Aorta (tissue), 5 donors: ENCODE measurements at regions of chr3 and their contacts with region 1.

Region 1: DNA sequence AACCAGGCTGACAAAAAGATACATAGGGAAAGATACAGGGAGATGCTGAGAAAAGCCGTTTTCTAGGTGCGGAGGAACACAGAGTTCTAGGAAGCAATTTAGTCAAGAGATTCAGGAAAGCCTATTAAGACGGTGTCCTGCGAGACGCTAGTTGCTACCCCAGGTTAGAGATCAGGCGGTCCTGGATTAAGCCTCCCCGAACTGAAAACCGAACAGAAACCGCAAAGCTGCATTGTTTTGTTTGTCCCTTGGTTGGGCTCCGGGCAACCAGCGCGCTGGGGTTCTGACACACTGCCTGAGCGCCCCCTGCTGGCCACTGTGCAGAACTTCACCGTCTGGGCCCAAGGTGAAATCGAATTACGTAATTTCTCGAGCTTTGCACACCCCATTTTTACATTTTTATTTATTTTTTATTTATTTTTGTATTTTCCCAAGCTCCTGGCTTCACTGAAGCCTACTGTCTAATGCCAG is 37.3 kb upstream of the NDUFB4 start:
- DNase-seq: peak; percentile 93 to 96
- ATAC-seq: peak; percentile 94
- H3K4me3 ChIP-seq: peak overlapping the region; percentile 48 to 49
- H3K27ac ChIP-seq: peak overlapping the region; percentile 82 to 84
- H3K4me1 ChIP-seq: no peaks in the 10 kb centered on the region
- H3K27me3 ChIP-seq: no peaks in the 10 kb centered on the region

Region 2: DNA sequence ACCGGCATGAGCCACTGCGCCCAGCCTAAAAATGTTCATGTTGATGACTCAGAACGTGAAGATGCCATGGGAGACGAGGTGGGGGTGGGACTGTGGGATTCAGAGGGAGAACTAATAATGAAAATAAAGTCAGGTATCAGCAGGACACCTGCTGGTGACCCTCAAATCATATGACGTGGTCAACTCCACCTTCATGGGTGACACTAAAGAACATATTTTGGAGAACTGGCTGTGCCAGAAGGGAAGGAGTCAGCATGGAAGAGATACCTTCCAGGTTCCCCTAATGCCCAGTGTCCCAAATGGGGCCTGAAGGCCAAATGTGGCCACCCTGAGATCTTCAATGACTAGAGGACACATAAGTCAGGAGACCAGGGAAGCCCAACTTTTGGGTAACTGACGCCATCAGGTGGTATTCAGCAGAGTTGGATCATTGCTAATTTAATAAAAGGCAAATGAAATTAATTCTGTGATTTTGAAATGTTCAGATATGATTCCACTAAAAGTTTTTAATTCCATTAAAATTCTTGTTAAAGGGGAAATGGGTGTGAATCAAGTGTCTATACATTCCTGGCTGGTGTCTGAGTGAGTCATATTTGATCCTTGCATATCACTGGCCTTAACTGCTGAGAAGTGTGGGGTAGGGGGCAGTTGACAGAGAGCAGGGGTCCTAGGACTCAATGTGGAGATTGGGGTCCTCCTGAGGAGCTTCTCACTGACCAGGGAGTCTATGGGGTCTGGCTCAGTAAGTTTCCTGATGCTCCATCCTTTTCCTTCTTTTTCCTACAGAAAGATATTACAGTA is 375.9 kb before region 1 on chr3:
- intact Hi-C with region 1: no loop called
- DNase-seq: no peak
- ATAC-seq: no peak
- H3K4me3 ChIP-seq: no peak overlapping the region
- H3K27ac ChIP-seq: no peak overlapping the region
- H3K4me1 ChIP-seq: no peaks in the 10 kb centered on the region
- H3K27me3 ChIP-seq: no peaks in the 10 kb centered on the region

Region 3: GRCh38 chr3:120245386-120245785 is 313.4 kb before region 1 on chr3:
- intact Hi-C with region 1: loop called (anchors 1 to 5 kb)
- DNase-seq: no peak
- ATAC-seq: no peak
- H3K4me3 ChIP-seq: no peak overlapping the region
- H3K27ac ChIP-seq: no peak overlapping the region
- H3K4me1 ChIP-seq: no peaks in the 10 kb centered on the region
- H3K27me3 ChIP-seq: no peaks in the 10 kb centered on the region

Region 4: GRCh38 chr3:120417272-120417911 is 141.4 kb before region 1 on chr3:
- intact Hi-C with region 1: loop called (anchors 2 to 5 kb)
- DNase-seq: peak; percentile 94 to 95
- ATAC-seq: peak; percentile 96
- H3K4me3 ChIP-seq: no peak overlapping the region
- H3K27ac ChIP-seq: peak overlapping the region in 1 of 2 donors; percentile 50
- H3K4me1 ChIP-seq: peaks cover 0 to 10% of the 10 kb centered on the region in 2 donors
- H3K27me3 ChIP-seq: no peaks in the 10 kb centered on the region

Region 5: GRCh38 chr3:120506828-120507774 is 51.7 kb before region 1 on chr3:
- intact Hi-C with region 1: loop called (anchors 5 kb)
- DNase-seq: no peak
- ATAC-seq: peak; percentile 62
- H3K4me3 ChIP-seq: no peak overlapping the region
- H3K27ac ChIP-seq: peak overlapping the region in 1 of 2 donors; percentile 30
- H3K4me1 ChIP-seq: peaks cover 4 to 6% of the 10 kb centered on the region in 2 donors
- H3K27me3 ChIP-seq: no peaks in the 10 kb centered on the region

Region 6: GRCh38 chr3:120615847-120616599 is 57.2 kb after region 1 on chr3:
- intact Hi-C with region 1: no loop called
- DNase-seq: peak; percentile 71 to 76
- ATAC-seq: no peak
- H3K4me3 ChIP-seq: no peak overlapping the region
- H3K27ac ChIP-seq: no peak overlapping the region
- H3K4me1 ChIP-seq: no peaks in the 10 kb centered on the region
- H3K27me3 ChIP-seq: no peaks in the 10 kb centered on the region